Activated B cell treated with CpG ODN at 0.5 μM for 24 hours (primary cell): ENCODE measurements at regions of chr1 and their contacts with region 1.

Region 1: DNA sequence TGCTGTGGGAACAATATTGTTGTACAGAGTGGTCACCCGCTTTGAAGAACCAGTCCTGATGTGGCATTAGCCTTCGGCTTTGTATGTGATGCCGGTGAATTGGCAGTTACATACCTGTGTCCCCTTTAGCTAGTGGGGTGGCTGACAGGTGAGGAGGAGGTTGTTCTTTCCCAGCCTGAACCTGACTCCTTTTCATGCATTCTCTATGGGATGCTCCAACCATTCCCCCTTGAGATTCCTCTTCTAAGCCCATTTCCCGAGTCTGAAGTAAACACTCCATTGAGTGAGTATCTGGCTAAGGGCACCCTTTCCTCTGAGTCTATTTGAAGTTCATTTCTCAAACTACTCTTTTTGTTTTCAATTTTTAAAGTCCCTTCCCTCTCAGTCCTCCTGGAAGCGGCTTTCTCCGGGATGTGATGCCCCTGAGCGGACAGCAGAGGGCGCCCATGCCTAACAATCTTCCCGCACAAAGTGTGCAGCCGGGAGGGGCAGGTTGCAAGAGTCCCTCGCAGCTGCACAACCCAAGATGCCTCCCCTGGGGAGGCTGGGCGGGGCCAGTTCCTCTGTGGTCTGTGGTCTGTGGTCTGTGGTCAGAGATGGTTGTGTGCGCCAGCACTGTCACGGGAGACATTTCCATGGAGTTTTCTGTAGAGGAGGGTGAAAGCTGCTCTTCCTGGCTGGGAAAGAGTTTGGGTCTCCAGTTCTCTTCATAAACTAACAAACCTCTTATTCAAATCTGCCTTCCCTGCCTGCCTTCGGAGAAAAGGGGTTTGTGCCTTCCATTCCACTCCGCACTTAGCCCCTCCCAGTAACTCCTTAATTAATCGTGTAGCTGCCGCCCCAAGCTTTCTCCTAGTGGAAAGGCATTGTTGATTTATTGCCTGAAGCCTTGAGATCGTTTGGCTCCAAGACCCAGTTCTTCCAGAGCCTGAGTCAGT is 36.4 kb upstream of the LMX1A start:
- DNase-seq: peak; percentile 88
- ATAC-seq: peak; percentile 99
- H3K4me3 Mint-ChIP-seq: peak overlapping the region; percentile 42
- H3K27ac Mint-ChIP-seq: peak overlapping the region; percentile 77
- H3K4me1 Mint-ChIP-seq: peaks cover 15% of the 10 kb centered on the region
- H3K27me3 Mint-ChIP-seq: peaks cover 58% of the 10 kb centered on the region
- CTCF ChIP-seq: peak; percentile 57

Region 2: DNA sequence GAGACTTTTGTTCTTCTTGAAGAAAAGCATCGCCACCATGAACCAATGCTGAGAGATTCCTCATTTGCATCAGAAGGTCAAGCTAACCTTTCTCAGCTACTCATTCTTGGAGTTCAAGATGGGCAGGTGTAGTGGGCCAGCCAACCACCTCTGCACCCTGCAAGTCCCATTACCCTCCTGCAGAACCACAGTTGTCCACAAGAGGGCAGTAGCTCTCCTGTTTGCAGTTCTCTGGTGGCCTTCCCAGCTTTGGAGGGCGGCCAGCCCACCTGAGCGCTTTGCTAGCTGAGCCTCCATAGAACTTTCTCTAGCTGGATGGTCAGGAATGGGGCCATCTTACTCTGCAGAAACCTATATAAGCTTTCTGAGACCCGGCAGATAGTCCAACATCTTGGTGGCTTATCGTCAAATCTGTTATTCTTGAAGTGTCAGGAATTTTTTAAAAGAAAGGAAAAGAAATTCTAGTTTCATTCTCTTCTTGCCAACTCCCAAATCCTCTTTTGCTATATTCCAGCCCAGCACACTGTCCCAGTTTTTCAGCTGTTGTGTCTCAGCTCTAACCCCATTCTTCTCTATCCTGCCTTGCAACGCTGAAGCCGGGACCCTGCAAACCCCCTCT is 25.4 kb before region 1 on chr1:
- CTCF ChIA-PET with region 1: interaction called, 6 read pairs
- POLR2A ChIA-PET with region 1: no interaction called
- intact Hi-C with region 1: loop called (anchors 2 kb)
- DNase-seq: peak; percentile 51
- ATAC-seq: peak; percentile 75
- H3K4me3 Mint-ChIP-seq: no peak overlapping the region
- H3K27ac Mint-ChIP-seq: no peak overlapping the region
- H3K4me1 Mint-ChIP-seq: peaks cover 3% of the 10 kb centered on the region
- H3K27me3 Mint-ChIP-seq: peaks cover 59% of the 10 kb centered on the region
- CTCF ChIP-seq: no peak

Region 3: GRCh38 chr1:165411396-165411795 is 18.5 kb after region 1 on chr1:
- CTCF ChIA-PET with region 1: no interaction called
- POLR2A ChIA-PET with region 1: no interaction called
- intact Hi-C with region 1: no loop called
- DNase-seq: no peak
- ATAC-seq: no peak
- H3K4me3 Mint-ChIP-seq: no peak overlapping the region
- H3K27ac Mint-ChIP-seq: no peak overlapping the region
- H3K4me1 Mint-ChIP-seq: no peaks in the 10 kb centered on the region
- H3K27me3 Mint-ChIP-seq: peaks cover 46% of the 10 kb centered on the region
- CTCF ChIP-seq: no peak

Region 4: DNA sequence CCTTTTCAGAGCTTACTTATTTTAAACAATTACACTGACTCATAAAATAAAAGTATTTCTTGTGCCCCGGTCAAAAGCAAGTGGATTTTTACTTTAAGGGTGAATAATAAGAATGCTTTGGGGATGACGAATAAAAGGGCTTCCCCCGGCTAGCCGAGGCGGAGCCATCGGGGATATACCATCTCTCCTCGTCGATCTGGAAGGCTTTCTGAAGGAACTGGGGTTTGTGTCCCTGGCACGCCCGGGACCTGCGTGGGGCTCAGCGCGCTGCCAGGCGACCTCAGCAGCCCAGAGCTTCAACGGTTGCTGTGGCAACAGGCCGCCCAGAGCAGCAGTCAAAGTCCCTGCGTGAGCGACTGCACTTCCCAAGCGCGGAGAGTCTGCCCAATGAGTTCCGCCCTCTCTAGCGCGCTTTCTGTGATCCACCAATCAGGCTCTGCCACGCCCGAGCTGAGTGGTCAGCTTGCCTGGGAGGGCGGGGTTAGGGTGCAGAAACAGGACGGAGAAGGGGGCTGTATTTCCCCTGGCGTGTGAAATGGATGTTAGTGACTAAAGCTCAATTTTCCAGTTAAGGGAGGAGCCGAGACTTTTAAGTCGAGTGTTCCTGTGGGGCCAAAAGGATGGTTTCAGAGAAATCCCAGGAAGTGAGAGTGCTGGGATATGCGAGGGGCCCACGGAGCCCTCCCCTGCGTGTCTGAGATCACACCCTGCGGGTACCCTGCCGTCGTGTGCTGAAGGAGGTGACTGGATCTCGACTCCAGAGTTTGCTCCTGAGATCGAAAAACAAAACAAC is 205.2 kb after region 1 on chr1:
- CTCF ChIA-PET with region 1: interaction called, 96 read pairs
- POLR2A ChIA-PET with region 1: interaction called, 5 read pairs
- intact Hi-C with region 1: loop called (anchors 1 kb)
- DNase-seq: peak; percentile 79
- ATAC-seq: peak; percentile 98
- H3K4me3 Mint-ChIP-seq: peak overlapping the region; percentile 92
- H3K27ac Mint-ChIP-seq: peak overlapping the region; percentile 62
- H3K4me1 Mint-ChIP-seq: peaks cover 25% of the 10 kb centered on the region
- H3K27me3 Mint-ChIP-seq: peaks cover 25% of the 10 kb centered on the region
- CTCF ChIP-seq: no peak

Region 5: DNA sequence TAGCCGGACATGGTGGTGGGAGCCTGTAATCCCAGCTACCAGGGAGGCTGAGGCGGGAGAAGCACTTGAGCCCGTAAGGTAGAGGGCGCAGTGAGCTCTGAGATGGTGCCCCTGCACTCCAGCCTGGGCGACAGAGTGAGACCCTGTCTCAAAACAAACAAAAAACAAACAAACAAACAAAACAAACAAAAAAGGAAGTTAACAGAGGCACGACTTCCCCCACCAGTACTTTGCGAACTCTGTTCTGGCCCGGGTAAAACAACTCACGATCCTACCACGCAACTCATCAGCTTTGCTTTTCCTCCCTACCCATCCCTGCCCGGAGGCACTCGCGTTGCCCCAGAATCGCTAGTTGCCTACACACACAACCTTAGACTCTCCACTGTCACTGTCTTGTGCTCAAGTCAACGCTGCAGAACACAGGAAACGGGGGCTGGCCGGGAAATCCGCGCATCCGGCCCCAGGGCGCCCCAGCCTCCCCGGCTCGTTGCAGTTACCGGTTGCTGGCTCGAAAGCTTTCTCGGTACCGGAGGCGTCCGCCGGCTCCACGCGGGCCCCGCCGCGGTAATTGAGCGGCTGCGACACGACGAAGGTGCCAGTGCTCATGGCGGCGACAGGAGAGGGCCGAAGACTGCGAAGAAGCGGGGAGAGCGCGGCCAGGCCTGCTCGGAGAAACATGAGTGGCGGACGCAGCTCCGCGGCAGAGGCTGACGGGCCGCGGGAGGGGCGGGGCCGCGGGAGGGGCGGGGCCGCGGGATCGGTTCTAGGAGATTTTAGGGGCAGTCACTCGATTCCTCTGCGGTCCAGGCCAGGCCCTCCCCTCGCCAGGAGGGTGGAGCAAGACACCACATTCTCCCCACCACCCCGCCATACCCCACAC is 305.2 kb after region 1 on chr1 and contains the start of gene ALDH9A1:
- CTCF ChIA-PET with region 1: no interaction called
- POLR2A ChIA-PET with region 1: interaction called, 3 read pairs
- intact Hi-C with region 1: loop called (anchors 2 kb)
- DNase-seq: peak; percentile 86
- ATAC-seq: peak; percentile 93
- H3K4me3 Mint-ChIP-seq: peak within 1 kb of the TSS; percentile 91
- H3K27ac Mint-ChIP-seq: peak within 1 kb of the TSS; percentile 91
- H3K4me1 Mint-ChIP-seq: peaks cover 27% of the 10 kb centered on the region
- H3K27me3 Mint-ChIP-seq: peaks cover 4% of the 10 kb centered on the region
- CTCF ChIP-seq: no peak
- total RNA-seq, gene ALDH9A1: 30.3 and 35.8 TPM in 2 replicates

Region 6: GRCh38 chr1:165827268-165828102 is 434.6 kb after region 1 on chr1 and contains the start of gene UCK2:
- CTCF ChIA-PET with region 1: no interaction called
- POLR2A ChIA-PET with region 1: no interaction called
- intact Hi-C with region 1: loop called (anchors 1 kb)
- DNase-seq: peak; percentile 70
- ATAC-seq: peak; percentile 75
- H3K4me3 Mint-ChIP-seq: peak within 1 kb of the TSS; percentile 92
- H3K27ac Mint-ChIP-seq: peak within 1 kb of the TSS; percentile 80
- H3K4me1 Mint-ChIP-seq: peaks cover 21% of the 10 kb centered on the region
- H3K27me3 Mint-ChIP-seq: no peaks in the 10 kb centered on the region
- CTCF ChIP-seq: no peak
- total RNA-seq, gene UCK2: 19.6 and 22.8 TPM in 2 replicates

Region 7: DNA sequence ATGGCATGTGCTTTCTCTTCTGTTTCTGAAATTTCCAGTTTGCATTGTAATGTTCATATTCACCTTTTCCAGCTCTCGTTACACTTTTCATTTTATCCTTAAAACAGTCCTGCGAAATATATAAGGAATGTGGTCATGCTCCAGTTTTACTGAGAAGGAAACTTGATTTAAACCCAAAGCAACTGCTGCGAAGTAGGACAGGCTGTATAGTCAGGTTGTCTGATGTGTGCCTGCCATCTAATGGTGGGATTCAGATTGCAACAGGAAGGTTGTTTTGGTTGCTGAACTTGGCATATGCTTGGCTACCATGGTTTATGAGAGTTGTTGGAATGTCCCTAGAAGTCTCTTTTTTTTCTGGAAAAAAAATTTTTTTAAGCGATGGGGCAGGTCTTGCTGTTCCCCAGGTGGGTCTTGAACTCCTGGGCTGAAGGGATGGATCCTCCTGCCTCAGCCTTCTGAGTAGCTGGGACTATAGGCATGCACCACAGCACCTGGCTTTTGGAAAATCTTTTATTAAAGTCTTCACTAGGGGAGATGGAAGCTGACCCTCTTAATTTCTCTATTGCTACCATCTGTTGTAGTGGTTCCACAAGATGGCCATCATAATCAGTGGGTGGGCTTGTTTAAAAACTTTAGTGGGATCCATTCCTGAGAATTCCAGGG is 521.4 kb after region 1 on chr1:
- CTCF ChIA-PET with region 1: interaction called, 15 read pairs
- POLR2A ChIA-PET with region 1: no interaction called
- intact Hi-C with region 1: loop called (anchors 1 kb)
- DNase-seq: peak; percentile 20
- ATAC-seq: peak; percentile 93
- H3K4me3 Mint-ChIP-seq: no peak overlapping the region
- H3K27ac Mint-ChIP-seq: no peak overlapping the region
- H3K4me1 Mint-ChIP-seq: peaks cover 2% of the 10 kb centered on the region
- H3K27me3 Mint-ChIP-seq: no peaks in the 10 kb centered on the region
- CTCF ChIP-seq: peak; percentile 99